Activated CD4-positive, alpha-beta memory T cell treated with anti-CD3 and anti-CD28 coated beads, Interleukin-2, amount 10 ng/mL, durations not matched to agents 7 days and 5 days (primary cell): ENCODE measurements at regions of chr12 and their contacts with region 1.

Region 1: DNA sequence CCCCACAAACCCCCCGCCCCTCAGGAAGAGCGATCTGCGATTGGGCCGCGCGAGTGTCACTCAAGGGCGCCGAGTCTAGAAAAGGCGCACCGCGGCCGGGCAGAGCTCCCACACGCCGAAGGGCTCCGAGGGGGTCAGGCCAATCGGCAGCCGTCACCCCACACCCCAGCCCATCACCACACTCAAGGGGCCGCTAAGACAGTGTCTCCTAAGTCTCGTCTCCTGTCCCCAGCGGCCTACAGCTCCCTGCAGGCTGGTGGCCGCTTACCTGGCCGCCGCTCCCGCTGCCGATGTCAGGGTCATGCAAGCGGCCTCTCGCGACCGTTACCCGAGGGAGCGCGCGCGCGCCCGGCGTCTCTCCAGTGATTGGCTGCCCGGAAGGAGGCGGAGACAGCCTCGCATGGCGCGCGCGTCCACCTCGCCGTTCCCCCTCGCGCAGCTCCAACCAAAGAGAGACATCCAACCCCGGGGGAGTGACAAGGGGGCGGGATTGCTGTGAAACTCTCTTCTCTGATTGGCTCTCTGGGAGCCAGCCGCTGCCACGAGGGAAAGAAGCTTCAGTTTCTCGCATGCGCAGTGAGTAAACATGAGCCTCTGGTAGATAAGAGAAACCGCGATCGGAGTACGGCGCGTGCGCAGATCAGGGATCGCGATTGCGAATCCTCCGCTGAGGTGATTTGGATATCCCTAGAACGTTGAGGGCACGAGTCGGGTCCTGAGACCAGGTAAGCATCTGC is at the starts of genes MPHOSPH9 and MTRFR:
- DNase-seq: peak; percentile 99
- H3K4me3 Mint-ChIP-seq: peak within 1 kb of the TSS; percentile 94
- H3K27ac Mint-ChIP-seq: peak within 1 kb of the TSS; percentile 97
- H3K4me1 Mint-ChIP-seq: peaks cover 76% of the 10 kb centered on the region
- H3K27me3 Mint-ChIP-seq: no peaks in the 10 kb centered on the region
- total RNA-seq, gene MPHOSPH9: 113 to 116 TPM
- total RNA-seq, gene MTRFR: 29.9 to 30.0 TPM

Region 2: DNA sequence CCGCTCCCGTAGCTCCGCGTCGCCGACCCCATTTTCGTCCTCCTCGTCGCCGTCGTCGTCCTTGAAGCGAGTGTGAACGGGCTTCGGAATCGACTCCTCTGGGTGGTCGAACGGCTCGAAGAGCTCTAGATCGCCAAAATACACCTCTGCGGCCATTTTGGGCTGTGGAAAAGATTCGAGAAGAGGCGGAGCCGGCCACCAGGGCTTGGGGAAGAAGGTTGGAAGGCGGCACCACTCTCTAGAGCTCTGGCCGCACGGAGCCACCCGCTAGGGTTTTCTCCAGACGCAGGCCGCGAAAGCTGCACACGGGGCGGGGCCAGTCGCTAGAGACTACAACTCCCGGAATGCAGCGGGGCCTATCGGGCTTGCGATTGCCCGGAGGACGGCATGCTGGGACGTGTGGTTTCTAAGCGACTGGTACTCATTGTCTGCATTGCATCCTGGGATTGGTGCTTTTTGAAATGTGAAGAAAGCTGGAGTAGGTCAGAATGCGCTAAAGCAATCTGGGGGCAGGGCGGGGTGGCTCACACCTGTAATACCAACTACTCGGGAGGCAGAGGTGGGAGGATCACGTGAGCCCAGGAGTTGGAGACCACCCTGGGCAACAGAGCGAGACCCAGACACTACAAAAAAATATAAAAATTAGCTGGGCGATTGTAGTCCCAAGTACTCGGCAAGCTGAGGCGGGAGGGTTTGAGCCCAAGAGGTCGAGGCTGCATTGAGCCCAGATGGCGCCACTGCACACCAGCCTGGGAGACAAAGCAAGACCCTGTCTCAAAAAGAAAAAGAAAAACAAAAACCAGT is 732.1 kb before region 1 on chr12 and contains the start of gene ZCCHC8:
- CTCF ChIA-PET with region 1: no interaction called
- POLR2A ChIA-PET with region 1: interaction called, 14 read pairs
- DNase-seq: peak; percentile 98
- H3K4me3 Mint-ChIP-seq: peak within 1 kb of the TSS; percentile 99
- H3K27ac Mint-ChIP-seq: peak within 1 kb of the TSS; percentile 97
- H3K4me1 Mint-ChIP-seq: peaks cover 41% of the 10 kb centered on the region
- H3K27me3 Mint-ChIP-seq: no peaks in the 10 kb centered on the region
- total RNA-seq, gene ZCCHC8: 44.4 to 46.6 TPM

Region 3: DNA sequence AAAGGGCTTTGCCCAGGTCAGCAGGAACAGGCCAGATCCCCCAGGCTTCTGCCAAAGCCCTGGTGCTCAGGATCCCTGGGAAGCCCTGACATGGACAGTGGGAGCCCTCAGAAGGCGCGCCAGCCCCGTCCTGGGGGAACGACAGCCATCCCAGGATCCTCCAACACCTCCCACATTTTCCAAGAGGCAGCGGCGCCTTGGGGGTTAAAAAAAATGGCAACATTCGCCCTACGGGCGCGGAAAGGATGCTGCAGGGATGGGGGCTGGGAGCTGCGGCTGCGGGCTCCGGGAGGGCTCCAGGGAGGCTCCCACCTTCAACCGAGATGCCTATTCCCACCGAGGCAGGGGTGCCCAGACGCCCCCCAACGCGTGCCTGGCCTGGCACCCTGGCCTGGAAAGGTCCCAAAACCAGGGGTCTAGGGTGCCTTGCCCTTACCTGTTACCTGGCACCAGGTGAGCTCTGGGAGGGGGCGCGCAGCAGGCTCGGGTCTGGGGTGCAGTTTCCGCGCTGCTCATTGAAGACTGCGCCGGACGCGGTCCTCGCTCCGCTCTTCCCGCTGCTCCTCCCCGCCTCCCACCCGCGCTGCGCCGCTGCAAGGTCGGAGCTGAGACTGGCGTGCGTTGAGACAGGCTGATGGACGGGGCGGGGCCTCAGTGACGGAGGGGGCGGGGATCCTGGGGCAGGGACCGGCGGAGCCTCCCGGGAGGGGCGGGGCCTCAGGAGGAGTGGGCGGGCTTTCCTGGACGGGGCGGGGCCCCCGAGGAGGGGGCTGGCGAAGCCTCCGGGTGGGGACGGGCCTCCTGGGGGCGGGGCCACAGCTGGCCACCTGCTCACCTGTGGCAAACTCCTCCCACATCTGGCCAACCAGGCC is 266.9 kb before region 1 on chr12 and contains the start of gene ABCB9:
- CTCF ChIA-PET with region 1: interaction called, 5 read pairs
- POLR2A ChIA-PET with region 1: interaction called, 15 read pairs
- DNase-seq: peak; percentile 93
- H3K4me3 Mint-ChIP-seq: peak within 1 kb of the TSS; percentile 61
- H3K27ac Mint-ChIP-seq: no peak within 1 kb of the TSS
- H3K4me1 Mint-ChIP-seq: peaks cover 10% of the 10 kb centered on the region
- H3K27me3 Mint-ChIP-seq: no peaks in the 10 kb centered on the region
- total RNA-seq, gene ABCB9: 3.2 to 3.3 TPM

Region 4: GRCh38 chr12:123075646-123076171 is 157.3 kb before region 1 on chr12:
- CTCF ChIA-PET with region 1: interaction called, 7 read pairs
- POLR2A ChIA-PET with region 1: interaction called, 49 read pairs
- DNase-seq: peak; percentile 86
- H3K4me3 Mint-ChIP-seq: peak overlapping the region; percentile 70
- H3K27ac Mint-ChIP-seq: peak overlapping the region; percentile 96
- H3K4me1 Mint-ChIP-seq: peaks cover 34% of the 10 kb centered on the region
- H3K27me3 Mint-ChIP-seq: no peaks in the 10 kb centered on the region

Region 5: DNA sequence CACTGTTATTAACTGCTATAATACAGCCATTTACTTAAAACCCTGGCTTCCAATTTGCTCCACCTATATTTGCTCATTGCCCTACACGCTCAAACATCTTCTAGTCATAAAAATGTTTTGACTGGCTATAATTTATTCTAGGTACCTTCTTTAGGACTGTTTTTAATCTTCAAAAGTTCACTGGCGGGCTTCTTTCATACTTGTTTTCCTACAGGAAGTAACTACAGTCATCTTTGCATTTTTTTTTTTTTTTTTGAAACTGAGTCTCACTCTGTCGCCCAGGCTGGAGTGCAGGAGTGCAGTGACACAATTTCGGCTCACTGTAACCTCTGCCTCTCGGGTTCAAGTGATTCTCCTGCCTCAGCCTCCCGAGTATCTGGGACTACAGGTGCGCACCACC is 32.6 kb before region 1 on chr12:
- CTCF ChIA-PET with region 1: interaction called, 8 read pairs
- POLR2A ChIA-PET with region 1: interaction called, 12 read pairs
- DNase-seq: no peak
- H3K4me3 Mint-ChIP-seq: no peak overlapping the region
- H3K27ac Mint-ChIP-seq: peak overlapping the region; percentile 61
- H3K4me1 Mint-ChIP-seq: peaks cover 19% of the 10 kb centered on the region
- H3K27me3 Mint-ChIP-seq: no peaks in the 10 kb centered on the region

Region 6: GRCh38 chr12:123457980-123458783 is 225.2 kb after region 1 on chr12 and contains the start of gene SNRNP35:
- CTCF ChIA-PET with region 1: no interaction called
- POLR2A ChIA-PET with region 1: interaction called, 22 read pairs
- DNase-seq: peak; percentile 86
- H3K4me3 Mint-ChIP-seq: peak within 1 kb of the TSS; percentile 94
- H3K27ac Mint-ChIP-seq: peak within 1 kb of the TSS; percentile 99
- H3K4me1 Mint-ChIP-seq: peaks cover 23% of the 10 kb centered on the region
- H3K27me3 Mint-ChIP-seq: no peaks in the 10 kb centered on the region
- total RNA-seq, gene SNRNP35: 29.7 to 35.0 TPM